Cardiac septum (tissue), 1 donor: ENCODE measurements at regions of chr11 and their contacts with region 1.

Region 1: GRCh38 chr11:108467091-108467823 is at the start of gene C11orf65:
- DNase-seq: peak; percentile 98
- total RNA-seq, gene C11orf65: 0.62 TPM

Region 2: GRCh38 chr11:108196901-108197300 is 270.4 kb before region 1 on chr11:
- intact Hi-C with region 1: no loop called
- DNase-seq: no peak

Region 3: GRCh38 chr11:108497317-108498045 is 30.2 kb after region 1 on chr11:
- intact Hi-C with region 1: loop called (anchors 1 kb)
- DNase-seq: peak; percentile 88

Region 4: DNA sequence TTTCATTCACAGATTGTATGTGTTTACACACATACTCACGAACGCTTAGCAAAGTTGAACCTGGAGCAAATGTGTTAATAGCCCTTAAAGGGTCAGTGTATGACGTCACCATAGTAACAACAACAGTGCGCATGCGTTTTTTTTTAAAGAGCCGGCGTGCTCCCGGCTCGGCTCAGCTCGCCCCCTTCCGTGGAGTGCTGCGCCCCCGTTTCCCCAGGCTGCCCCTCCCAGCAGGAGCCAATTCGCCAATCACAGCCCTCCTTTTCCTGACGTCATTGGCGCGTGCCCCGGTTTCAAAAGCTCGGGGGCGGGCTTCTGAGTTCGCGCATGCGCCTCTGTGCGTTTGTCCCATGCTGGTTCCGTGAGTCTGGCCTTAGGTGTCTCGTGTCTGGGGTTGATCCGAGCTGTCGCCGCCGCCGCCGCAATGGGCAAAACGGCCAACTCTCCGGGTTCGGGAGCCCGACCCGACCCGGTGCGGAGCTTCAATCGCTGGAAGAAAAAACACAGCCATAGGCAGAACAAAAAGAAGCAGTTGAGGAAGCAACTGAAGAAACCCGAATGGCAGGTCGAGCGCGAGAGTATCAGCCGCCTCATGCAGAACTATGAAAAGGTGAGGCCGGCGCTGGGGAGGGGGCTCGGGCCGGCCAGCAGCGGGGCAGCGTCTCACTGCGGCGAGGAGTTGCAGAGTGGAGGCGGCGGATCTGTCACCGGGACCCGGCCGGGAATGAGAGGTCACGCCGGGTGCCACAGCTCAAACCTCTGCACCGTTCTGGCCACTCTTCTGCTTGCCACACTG is 197.7 kb after region 1 on chr11 and contains the start of gene DDX10:
- intact Hi-C with region 1: loop called (anchors 5 kb)
- DNase-seq: peak; percentile 99
- total RNA-seq, gene DDX10: 11.5 TPM